ENCODE measurements at regions of chr5 and their contacts with region 1.

Region 1: DNA sequence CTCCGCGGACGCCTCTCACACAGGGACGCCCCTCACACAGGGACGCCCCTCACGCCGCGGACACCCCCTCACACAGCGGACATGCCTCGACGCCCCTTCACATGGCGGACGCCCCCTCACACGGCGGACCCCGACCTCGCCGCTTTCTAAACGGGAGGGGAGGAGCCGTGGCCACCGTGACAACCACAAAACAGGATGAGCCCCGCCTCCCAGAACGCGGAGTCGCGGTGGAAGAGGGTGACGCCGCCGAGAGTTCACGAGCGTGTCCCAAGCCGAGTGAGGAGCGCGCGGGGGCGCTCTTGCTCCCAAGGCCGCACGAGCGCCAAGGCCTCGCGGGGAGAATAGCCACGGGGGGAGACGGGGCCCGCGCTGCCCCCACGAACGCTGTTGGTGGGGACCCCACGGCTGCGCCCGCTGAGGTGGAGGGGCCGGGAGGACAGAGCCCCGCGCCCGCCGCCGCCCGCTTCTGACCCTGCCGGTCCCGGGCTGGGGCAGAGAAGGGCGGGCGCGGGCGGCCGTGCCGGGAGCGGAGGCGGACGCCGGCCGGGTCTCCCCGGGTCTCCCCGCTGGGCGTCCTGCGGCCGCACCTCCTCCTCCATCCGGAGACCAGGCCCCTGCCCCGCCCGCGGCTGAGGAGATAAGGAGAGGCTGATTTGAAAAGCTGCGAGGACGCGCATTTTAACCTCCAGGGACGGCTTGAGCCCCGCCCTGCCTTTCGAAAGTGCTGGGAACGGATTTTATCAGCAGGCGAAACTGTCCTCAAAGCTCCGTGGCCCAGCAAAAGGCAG is 3.9 kb upstream of the NKD2 start:
- DNase-seq: peak in 1 of 2 experiments; percentile 73
- H3K4me3 ChIP-seq: peak overlapping the region; percentile 26 to 69 (median 36)
- H3K27ac ChIP-seq: no peak overlapping the region
- H3K4me1 ChIP-seq: peaks cover 0 to 13% (median 3%) of the 10 kb centered on the region in 4 experiments; a peak in 4 of 7 replicates
- H3K27me3 ChIP-seq: peaks cover 18 to 56% (median 52%) of the 10 kb centered on the region in 4 experiments
- CTCF ChIP-seq: no peak; a peak in 1 of 4 replicates
- EP300 ChIP-seq: no peak
- POLR2A ChIP-seq: no peak
- RAD21 ChIP-seq: no peak

Region 2: GRCh38 chr5:982377-983237 is 22.0 kb before region 1 on chr5:
- CTCF ChIA-PET with region 1: interaction called, 71 read pairs
- POLR2A ChIA-PET with region 1: no interaction called
- DNase-seq: peak; percentile 38 to 88
- H3K4me3 ChIP-seq: no peak overlapping the region
- H3K27ac ChIP-seq: no peak overlapping the region
- H3K4me1 ChIP-seq: peaks cover 0 to 4% (median under 1%) of the 10 kb centered on the region in 4 experiments; a peak in 4 of 7 replicates
- H3K27me3 ChIP-seq: no peaks in the 10 kb centered on the region
- CTCF ChIP-seq: peak; percentile 76 to 88 (median 78)
- EP300 ChIP-seq: no peak
- POLR2A ChIP-seq: no peak
- RAD21 ChIP-seq: peak; percentile 43 to 68

Region 3: DNA sequence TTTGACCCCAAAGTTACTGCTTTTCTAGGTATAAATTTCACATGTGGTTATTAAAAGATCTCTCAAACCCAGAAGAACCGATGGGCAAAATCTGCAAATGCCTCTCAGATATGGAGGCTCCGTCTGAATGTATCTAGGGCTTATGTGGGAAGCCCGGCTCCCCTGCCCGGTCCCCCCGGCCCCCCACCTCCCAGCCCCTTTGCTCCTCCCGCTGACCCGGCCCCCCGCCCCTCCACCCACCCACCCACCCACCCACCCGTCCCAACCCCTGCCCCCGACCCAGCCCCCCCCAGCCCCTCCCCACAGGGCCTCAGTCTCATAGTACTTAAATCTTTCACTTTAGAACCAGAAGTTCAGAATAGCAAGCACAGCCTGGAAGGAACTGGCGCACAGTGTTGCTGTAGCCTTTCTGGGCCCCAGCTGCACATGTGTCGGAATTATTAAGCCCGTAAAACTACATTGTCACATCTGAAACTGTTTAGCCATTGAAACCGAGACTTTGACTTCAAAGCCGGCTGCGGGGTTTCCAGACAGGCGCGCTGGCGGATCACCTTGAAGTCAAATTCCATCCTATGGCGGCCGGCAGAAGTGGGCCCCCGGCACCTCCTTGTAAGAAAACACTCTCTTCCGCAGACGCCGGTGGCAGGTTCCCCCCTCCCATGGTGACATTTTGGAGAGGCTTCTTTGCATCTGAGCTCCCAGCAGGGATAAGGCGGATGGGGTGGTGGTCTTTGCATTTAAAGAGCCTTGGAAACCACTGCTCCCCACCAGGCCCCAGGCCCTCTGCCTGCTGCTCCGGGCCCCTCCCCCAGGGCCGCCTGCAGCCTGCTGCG is 16.7 kb after region 1 on chr5:
- CTCF ChIA-PET with region 1: interaction called, 38 read pairs
- POLR2A ChIA-PET with region 1: interaction called, 3 read pairs
- DNase-seq: no peak
- H3K4me3 ChIP-seq: no peak overlapping the region
- H3K27ac ChIP-seq: no peak overlapping the region
- H3K4me1 ChIP-seq: peaks cover 0 to 12% (median 5%) of the 10 kb centered on the region in 4 experiments; a peak in 4 of 7 replicates
- H3K27me3 ChIP-seq: no peaks in the 10 kb centered on the region
- CTCF ChIP-seq: no peak
- EP300 ChIP-seq: no peak
- POLR2A ChIP-seq: no peak
- RAD21 ChIP-seq: no peak

Region 4: DNA sequence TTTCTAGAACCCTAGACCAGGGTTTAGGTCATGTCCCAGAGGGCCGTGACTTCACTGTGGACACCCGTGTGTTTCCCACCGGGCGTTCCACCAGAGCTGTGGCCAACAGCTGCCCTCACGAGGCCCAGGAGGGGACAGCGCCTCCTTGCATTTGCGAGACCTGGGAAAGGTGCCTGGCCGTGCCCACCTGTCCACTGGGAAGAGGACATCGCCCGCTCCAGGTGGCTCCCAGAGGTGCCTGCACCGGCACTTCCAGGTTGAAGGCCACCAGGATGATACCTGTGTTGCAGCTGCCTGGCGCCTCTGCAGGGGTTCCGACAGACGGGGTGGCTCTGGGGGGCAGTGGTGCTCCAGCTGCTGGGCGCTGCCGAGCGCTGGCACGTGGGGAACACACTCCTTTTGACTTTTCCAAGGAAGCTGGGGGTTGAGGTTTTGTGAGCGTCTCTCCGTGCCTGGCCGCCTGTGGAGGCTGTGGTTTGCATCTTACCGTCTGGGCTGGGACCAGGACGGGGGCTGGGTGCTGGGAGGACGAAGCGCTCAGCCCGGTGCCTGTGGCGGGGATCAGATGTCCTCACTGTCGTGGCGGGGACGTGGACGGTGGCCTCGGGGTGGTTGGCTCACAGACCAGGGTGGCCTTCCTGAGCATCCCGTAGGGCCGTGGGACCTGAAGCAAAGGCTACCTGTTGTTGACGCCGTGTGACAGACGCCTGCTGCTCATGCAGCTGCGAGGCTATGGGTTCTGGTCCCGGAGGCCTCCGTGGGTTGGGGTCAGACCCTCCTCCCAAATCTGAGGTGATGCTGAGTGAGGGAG is 23.2 kb after region 1 on chr5:
- CTCF ChIA-PET with region 1: interaction called, 10 read pairs
- POLR2A ChIA-PET with region 1: no interaction called
- DNase-seq: no peak
- H3K4me3 ChIP-seq: no peak overlapping the region
- H3K27ac ChIP-seq: no peak overlapping the region
- H3K4me1 ChIP-seq: peaks cover 0 to 3% (median 1%) of the 10 kb centered on the region in 4 experiments; a peak in 3 of 7 replicates
- H3K27me3 ChIP-seq: no peaks in the 10 kb centered on the region
- CTCF ChIP-seq: no peak
- EP300 ChIP-seq: no peak
- POLR2A ChIP-seq: no peak
- RAD21 ChIP-seq: no peak

Measured in H1 (cell line).